CD4-positive, alpha-beta memory T cell (primary cell): ENCODE measurements at regions of chr16 and their contacts with region 1.

Region 1: DNA sequence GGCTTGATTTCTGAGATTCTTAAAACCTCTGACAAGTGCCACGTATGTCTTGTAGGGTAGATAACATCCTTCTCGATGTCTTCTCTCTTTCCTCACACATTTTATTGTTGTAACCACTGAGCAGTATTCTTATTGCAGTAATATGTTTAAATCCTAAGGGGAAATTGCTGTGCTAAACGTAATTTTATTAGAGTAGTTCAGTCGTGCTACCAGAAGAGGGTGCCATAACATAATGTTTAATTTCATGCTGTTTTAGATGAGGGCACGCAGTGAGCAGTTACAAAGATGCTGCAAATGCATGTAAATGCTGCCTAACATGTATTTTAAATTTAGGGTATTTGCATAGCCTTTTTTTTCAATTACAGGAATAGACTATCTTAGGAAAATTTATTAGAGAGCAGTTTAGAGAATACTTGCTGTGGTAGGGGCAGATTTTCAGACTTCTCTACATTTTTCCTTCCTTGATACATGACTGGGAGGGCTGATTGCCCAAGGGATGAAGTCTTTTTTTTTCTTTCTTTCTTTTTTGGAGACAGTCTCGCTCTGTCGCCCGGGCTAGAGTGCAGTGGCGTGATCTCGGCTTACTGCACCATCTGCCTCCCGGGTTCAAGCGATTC is 51.7 kb downstream of the GAN start:
- DNase-seq: peak in 4 of 5 donors; percentile 48 to 59 (median 54)
- H3K4me3 ChIP-seq: no peak overlapping the region
- H3K4me3 Mint-ChIP-seq: no peak overlapping the region
- H3K27ac ChIP-seq: no peak overlapping the region
- H3K27ac Mint-ChIP-seq: no peak overlapping the region
- H3K4me1 ChIP-seq: no peaks in the 10 kb centered on the region
- H3K4me1 Mint-ChIP-seq: no peaks in the 10 kb centered on the region
- H3K27me3 ChIP-seq: no peaks in the 10 kb centered on the region
- H3K27me3 Mint-ChIP-seq: no peaks in the 10 kb centered on the region

Region 2: GRCh38 chr16:81174654-81175571 is 191.5 kb before region 1 on chr16:
- CTCF ChIA-PET with region 1: no interaction called
- POLR2A ChIA-PET with region 1: no interaction called
- intact Hi-C with region 1: no loop called
- DNase-seq: no peak
- H3K4me3 ChIP-seq: no peak overlapping the region
- H3K4me3 Mint-ChIP-seq: no peak overlapping the region
- H3K27ac ChIP-seq: no peak overlapping the region
- H3K27ac Mint-ChIP-seq: no peak overlapping the region
- H3K4me1 ChIP-seq: no peaks in the 10 kb centered on the region
- H3K4me1 Mint-ChIP-seq: peaks cover 0 to 1% (median 0%) of the 10 kb centered on the region in 4 donors
- H3K27me3 ChIP-seq: no peaks in the 10 kb centered on the region
- H3K27me3 Mint-ChIP-seq: peaks cover 3 to 15% of the 10 kb centered on the region in 2 donors

Region 3: DNA sequence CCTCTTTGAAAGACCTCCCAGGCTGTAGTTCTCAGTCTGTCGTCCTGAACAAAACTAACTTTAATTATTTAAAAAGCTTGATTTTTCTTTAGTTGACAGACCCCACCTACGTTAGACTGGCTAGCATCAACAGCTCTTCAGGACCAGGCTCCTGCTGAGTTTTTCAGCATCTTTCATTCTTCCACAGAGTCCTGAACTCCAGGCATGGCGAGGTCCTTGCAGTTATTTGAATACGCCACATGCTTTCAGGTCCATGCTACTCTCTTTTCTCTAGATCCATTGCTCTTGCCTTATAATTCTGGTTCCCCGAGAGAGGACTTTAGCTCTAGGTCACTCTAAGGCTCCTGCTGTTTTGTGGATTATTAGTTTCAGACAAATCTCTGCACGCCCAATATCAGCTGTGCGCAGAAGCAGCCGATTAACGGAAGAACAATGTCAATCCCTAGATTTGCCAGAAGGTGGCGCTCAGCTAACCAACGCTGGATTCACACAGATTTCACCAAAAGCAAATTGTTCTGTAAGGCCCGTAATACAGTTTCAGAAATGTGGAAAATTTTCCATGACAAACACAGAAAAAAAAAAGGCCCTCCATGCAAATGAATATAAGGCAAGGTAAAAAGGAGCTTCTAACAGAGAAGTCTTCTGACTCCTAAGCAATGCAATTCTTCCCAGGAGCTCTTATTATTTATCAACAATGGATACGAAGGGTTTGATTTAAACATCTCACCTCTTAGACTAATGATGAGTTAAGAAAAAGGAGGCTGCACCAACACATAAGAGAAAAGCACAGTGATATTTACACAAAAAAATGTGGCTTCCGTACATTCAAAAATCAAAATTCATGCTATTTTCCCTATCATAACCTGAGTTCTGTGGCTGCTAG is 161.4 kb before region 1 on chr16:
- CTCF ChIA-PET with region 1: interaction called, 5 read pairs
- POLR2A ChIA-PET with region 1: no interaction called
- intact Hi-C with region 1: loop called (anchors 1 kb)
- DNase-seq: peak in 4 of 5 donors; percentile 10 to 35 (median 28)
- H3K4me3 ChIP-seq: no peak overlapping the region
- H3K4me3 Mint-ChIP-seq: no peak overlapping the region
- H3K27ac ChIP-seq: no peak overlapping the region
- H3K27ac Mint-ChIP-seq: no peak overlapping the region
- H3K4me1 ChIP-seq: no peaks in the 10 kb centered on the region
- H3K4me1 Mint-ChIP-seq: peaks cover 0 to 3% (median under 1%) of the 10 kb centered on the region in 4 donors
- H3K27me3 ChIP-seq: no peaks in the 10 kb centered on the region
- H3K27me3 Mint-ChIP-seq: peaks cover 6 to 18% of the 10 kb centered on the region in 2 donors

Region 4: GRCh38 chr16:81293909-81294823 is 72.3 kb before region 1 on chr16:
- CTCF ChIA-PET with region 1: no interaction called
- POLR2A ChIA-PET with region 1: no interaction called
- intact Hi-C with region 1: no loop called
- DNase-seq: no peak
- H3K4me3 ChIP-seq: no peak overlapping the region
- H3K4me3 Mint-ChIP-seq: no peak overlapping the region
- H3K27ac ChIP-seq: no peak overlapping the region
- H3K27ac Mint-ChIP-seq: no peak overlapping the region
- H3K4me1 ChIP-seq: no peaks in the 10 kb centered on the region
- H3K4me1 Mint-ChIP-seq: no peaks in the 10 kb centered on the region
- H3K27me3 ChIP-seq: no peaks in the 10 kb centered on the region
- H3K27me3 Mint-ChIP-seq: peaks cover 14 to 19% of the 10 kb centered on the region in 2 donors

Region 5: DNA sequence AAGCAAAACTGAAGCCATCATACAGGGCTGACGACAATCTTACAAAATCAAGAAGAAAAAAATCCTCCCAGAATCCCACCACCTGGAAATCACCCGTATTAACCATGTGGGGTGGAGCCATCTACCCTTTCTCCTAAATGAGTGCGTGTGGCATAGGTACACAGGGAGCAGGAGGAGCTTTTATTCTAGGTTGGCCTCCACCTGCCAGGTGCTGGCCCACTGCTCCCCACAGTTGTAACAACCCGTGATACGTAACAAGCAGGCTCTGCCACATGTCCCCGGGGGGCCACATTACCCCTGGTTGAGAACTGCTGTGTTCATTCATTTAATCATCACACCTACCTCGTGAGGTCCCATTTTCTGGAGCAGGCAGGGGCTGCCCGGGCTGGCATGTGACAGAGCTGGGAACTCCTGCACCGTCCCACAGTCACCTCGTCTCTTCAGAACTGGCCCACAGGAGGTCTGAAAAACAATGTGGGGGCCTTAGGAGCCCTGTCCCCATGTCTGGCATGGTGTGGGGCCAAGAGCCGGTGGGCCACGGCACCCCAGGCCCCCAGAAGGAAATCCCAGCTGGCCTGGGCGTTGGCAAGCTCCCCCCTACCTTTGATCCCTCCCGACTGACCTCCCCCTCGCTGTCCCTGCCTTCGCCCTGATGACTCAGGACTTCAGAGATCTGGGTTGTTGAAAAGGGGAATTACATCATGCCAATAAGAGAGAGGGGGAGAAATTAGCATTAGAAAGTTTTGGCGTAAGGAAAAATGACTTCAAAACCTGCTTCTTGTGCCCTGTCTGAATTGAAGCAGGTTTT is 91.1 kb after region 1 on chr16:
- CTCF ChIA-PET with region 1: no interaction called
- POLR2A ChIA-PET with region 1: no interaction called
- intact Hi-C with region 1: no loop called
- DNase-seq: no peak
- H3K4me3 ChIP-seq: no peak overlapping the region
- H3K4me3 Mint-ChIP-seq: no peak overlapping the region
- H3K27ac ChIP-seq: no peak overlapping the region
- H3K27ac Mint-ChIP-seq: peak overlapping the region in 3 of 7 donors; percentile 29 to 71 (median 44)
- H3K4me1 ChIP-seq: peaks cover 31% of the 10 kb centered on the region
- H3K4me1 Mint-ChIP-seq: peaks cover 33 to 69% (median 51%) of the 10 kb centered on the region in 4 donors
- H3K27me3 ChIP-seq: no peaks in the 10 kb centered on the region
- H3K27me3 Mint-ChIP-seq: no peaks in the 10 kb centered on the region

Region 6: DNA sequence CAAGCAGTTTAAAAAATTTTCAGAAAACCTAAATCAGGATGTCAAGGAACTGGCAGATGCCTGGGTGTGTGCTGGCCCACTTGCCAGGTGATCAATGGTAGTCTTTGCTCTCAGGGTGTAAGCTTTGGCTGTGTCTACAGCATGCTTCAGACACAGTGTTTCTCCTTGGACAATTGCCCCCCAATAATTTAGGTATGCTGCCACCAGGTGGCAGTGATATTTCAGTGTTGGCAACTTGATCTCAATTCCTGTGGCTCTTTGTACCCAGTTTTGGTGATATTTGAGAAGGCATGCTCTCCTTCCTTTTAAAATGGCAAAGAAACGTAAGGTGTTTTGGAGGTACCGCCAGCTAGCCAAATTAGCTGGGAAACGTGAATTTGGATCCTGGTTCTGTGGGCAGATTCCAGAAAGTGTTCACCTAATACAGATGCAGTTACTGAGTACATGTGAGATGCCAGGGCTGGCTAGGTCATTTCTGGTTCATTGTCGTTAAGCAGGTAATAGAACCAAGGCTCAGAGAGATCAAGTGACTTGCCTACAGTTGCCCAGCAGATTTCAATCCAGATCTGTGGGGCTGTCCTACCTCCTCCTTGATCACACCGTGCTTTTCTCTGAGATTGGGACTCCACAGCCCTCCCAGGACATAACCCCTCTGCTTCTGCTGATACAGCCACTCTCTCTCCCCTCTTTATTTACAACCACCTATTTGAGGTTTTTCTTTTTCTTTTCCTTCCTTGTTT is 257.1 kb after region 1 on chr16:
- CTCF ChIA-PET with region 1: interaction called, 3 read pairs
- POLR2A ChIA-PET with region 1: no interaction called
- intact Hi-C with region 1: loop called (anchors 1 kb)
- DNase-seq: peak in 4 of 5 donors; percentile 52 to 61 (median 58)
- H3K4me3 ChIP-seq: no peak overlapping the region
- H3K4me3 Mint-ChIP-seq: no peak overlapping the region
- H3K27ac ChIP-seq: no peak overlapping the region
- H3K27ac Mint-ChIP-seq: peak overlapping the region; percentile 6 to 89 (median 72)
- H3K4me1 ChIP-seq: peaks cover 6% of the 10 kb centered on the region
- H3K4me1 Mint-ChIP-seq: peaks cover 4 to 9% (median 7%) of the 10 kb centered on the region in 4 donors
- H3K27me3 ChIP-seq: no peaks in the 10 kb centered on the region
- H3K27me3 Mint-ChIP-seq: no peaks in the 10 kb centered on the region

Region 7: GRCh38 chr16:81730090-81731051 is 363.9 kb after region 1 on chr16:
- CTCF ChIA-PET with region 1: interaction called, 54 read pairs
- POLR2A ChIA-PET with region 1: no interaction called
- intact Hi-C with region 1: no loop called
- DNase-seq: peak; percentile 42 to 73 (median 58)
- H3K4me3 ChIP-seq: peak overlapping the region; percentile 11 to 25
- H3K4me3 Mint-ChIP-seq: peak overlapping the region; percentile 85 to 93 (median 88)
- H3K27ac ChIP-seq: peak overlapping the region; percentile 65
- H3K27ac Mint-ChIP-seq: peak overlapping the region; percentile 78 to 97 (median 93)
- H3K4me1 ChIP-seq: peaks cover 12% of the 10 kb centered on the region
- H3K4me1 Mint-ChIP-seq: peaks cover 8 to 25% (median 17%) of the 10 kb centered on the region in 4 donors
- H3K27me3 ChIP-seq: no peaks in the 10 kb centered on the region
- H3K27me3 Mint-ChIP-seq: no peaks in the 10 kb centered on the region

Region 8: GRCh38 chr16:81873843-81874752 is 507.7 kb after region 1 on chr16:
- CTCF ChIA-PET with region 1: interaction called, 30 read pairs
- POLR2A ChIA-PET with region 1: no interaction called
- intact Hi-C with region 1: no loop called
- DNase-seq: peak in 3 of 5 donors; percentile 16 to 37 (median 23)
- H3K4me3 ChIP-seq: no peak overlapping the region
- H3K4me3 Mint-ChIP-seq: no peak overlapping the region
- H3K27ac ChIP-seq: no peak overlapping the region
- H3K27ac Mint-ChIP-seq: peak overlapping the region in 1 of 7 donors; percentile 36
- H3K4me1 ChIP-seq: peaks cover 6% of the 10 kb centered on the region
- H3K4me1 Mint-ChIP-seq: peaks cover 11 to 19% (median 15%) of the 10 kb centered on the region in 4 donors
- H3K27me3 ChIP-seq: no peaks in the 10 kb centered on the region
- H3K27me3 Mint-ChIP-seq: no peaks in the 10 kb centered on the region